IMR-90 (cell line): ENCODE measurements at regions of chr7 and their contacts with region 1.

Region 1: GRCh38 chr7:17304926-17305325 is 6.5 kb downstream of the AHR start:
- DNase-seq: peak; percentile 88
- ATAC-seq: peak; percentile 24; the same call in 1 of the 2 replicates
- H3K4me3 ChIP-seq: no peak overlapping the region
- H3K27ac ChIP-seq: no peak overlapping the region
- H3K4me1 ChIP-seq: peaks cover 17% of the 10 kb centered on the region
- H3K27me3 ChIP-seq: no peaks in the 10 kb centered on the region
- CTCF ChIP-seq: no peak
- POLR2A ChIP-seq: no peak
- RAD21 ChIP-seq: no peak

Region 2: DNA sequence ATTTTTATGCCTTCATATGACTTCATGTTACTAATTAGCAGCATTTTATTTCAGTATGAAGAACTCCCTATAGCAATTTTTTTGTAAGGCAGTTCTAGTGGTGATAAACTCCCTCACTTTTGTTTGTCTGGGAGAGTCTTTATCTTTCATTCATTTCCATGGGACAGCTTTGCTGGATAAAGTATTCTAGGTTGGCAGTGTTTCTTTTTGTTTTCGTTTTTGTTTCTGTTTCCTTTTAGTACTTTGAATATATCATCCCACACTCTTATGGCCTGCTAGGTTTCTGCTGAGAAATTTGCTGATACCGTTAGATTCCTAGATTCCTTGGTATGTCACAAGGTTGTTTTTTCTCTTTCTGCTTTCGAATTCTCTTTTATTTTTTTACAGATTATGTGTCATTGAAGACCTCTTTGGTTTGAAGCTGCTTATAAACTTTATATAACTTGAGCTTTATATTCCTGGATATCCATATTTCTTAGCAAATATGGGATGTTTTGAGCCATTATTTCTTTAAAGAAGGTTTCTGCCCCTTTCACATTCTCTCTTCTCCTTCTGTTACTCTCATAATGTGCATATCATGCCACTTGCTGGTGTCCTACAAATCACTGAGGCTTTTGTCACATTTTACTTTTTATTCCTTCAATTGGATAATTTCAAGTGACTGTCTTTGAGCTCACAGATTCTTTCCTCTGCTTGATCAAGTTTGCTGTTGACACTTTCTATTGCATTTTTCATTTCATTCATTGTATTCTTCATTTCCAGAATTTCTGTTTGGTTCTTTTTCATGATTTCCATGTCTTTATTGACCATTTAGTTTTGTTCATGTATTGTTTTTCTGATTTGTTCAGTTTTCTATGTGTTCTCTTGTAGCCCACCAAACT is 35.3 kb before region 1 on chr7:
- CTCF ChIA-PET with region 1: no interaction called
- POLR2A ChIA-PET with region 1: no interaction called
- dilution Hi-C with region 1: no loop called
- in situ Hi-C with region 1: no loop called
- intact Hi-C with region 1: no loop called
- DNase-seq: no peak
- ATAC-seq: no peak
- H3K4me3 ChIP-seq: no peak overlapping the region
- H3K27ac ChIP-seq: no peak overlapping the region
- H3K4me1 ChIP-seq: no peaks in the 10 kb centered on the region
- H3K27me3 ChIP-seq: no peaks in the 10 kb centered on the region
- CTCF ChIP-seq: no peak
- POLR2A ChIP-seq: no peak
- RAD21 ChIP-seq: no peak

Region 3: DNA sequence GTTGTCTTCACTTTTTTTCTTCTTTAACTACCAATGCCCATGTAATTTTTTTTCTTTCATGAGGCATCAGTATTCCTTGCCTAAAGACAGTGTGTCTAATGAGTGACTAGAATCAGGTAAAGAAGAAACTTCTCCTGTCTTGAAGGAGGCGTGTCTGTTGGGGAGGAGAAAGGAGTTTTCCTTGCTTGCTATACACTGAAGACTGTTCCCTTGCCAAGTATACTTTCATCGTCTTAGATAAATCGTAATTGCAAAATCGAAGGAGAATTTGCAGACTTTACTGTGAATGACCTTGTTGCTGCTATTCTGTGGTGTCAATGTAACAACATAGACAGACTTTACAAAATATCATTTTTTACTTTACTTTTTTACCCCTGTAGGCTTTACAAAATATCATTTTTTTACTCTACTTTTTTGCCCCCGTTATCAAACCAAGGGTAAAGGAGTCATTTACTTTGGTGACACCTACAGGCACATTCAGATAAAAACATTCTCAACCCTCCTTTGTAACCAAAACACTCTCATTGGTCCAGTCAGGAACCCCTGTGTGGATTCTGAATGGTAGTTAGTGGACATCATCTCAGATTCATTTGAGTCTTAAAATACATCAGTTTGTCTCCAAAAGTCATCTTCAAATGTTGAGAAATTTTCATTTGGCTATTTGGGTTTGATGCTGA is 226.0 kb after region 1 on chr7:
- CTCF ChIA-PET with region 1: interaction called, 3 read pairs
- POLR2A ChIA-PET with region 1: no interaction called
- dilution Hi-C with region 1: no loop called
- in situ Hi-C with region 1: no loop called
- intact Hi-C with region 1: loop called (anchors 5 kb)
- DNase-seq: peak; percentile 15
- ATAC-seq: 0 out of 2 replicates have a peak, but pooled peaks have one; percentile 14
- H3K4me3 ChIP-seq: no peak overlapping the region
- H3K27ac ChIP-seq: no peak overlapping the region
- H3K4me1 ChIP-seq: peaks cover 9% of the 10 kb centered on the region
- H3K27me3 ChIP-seq: no peaks in the 10 kb centered on the region
- CTCF ChIP-seq: peak; percentile 41
- POLR2A ChIP-seq: no peak
- RAD21 ChIP-seq: peak; percentile 41

Region 4: DNA sequence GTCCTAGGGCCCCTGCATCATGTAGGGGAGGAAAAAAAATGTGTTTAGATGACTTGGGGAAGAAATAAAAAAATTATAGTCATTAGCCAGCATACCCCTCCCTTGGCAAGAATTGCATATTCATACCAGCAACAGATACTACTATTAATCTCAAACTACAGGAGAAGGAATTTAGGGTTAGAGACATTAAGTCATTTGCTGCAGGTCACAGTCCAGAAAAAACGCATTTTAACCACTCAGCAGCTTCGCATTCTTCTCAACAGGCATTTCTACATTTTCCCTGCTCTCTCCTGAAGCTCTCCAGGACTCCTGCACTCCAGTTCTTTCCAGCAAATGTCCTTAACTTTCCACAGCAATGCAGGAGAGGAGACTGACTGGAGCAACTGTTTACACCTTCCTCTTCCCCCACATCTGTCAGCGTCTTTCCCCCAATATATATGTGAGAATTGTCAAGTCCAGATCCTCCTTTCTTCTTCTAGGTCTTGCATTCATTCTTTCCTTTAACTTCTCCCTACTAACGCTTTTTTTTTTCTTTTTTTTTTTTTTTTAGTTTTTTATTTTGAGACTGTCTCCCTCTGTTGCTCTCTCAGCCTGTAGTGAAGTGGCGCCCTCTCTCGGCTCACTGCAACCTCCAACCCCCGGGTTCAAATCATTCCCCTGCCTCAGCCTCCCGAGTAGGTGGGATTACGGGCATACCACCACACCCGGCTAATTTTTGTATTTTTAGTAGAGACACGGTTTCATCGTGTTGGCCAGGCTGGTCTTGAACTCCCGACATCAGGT is 687.1 kb after region 1 on chr7:
- CTCF ChIA-PET with region 1: no interaction called
- POLR2A ChIA-PET with region 1: no interaction called
- dilution Hi-C with region 1: no loop called
- in situ Hi-C with region 1: no loop called
- intact Hi-C with region 1: no loop called
- DNase-seq: no peak
- ATAC-seq: no peak
- H3K4me3 ChIP-seq: no peak overlapping the region
- H3K27ac ChIP-seq: no peak overlapping the region
- H3K4me1 ChIP-seq: no peaks in the 10 kb centered on the region; the same call in 1 of the 2 replicates
- H3K27me3 ChIP-seq: no peaks in the 10 kb centered on the region
- CTCF ChIP-seq: peak; percentile 20; the same call in 1 of the 2 replicates
- POLR2A ChIP-seq: no peak
- RAD21 ChIP-seq: no peak; the same call in 1 of the 2 replicates